CD4-positive, alpha-beta T cell (primary cell): ENCODE measurements at regions of chr4 and their contacts with region 1.

Region 1: DNA sequence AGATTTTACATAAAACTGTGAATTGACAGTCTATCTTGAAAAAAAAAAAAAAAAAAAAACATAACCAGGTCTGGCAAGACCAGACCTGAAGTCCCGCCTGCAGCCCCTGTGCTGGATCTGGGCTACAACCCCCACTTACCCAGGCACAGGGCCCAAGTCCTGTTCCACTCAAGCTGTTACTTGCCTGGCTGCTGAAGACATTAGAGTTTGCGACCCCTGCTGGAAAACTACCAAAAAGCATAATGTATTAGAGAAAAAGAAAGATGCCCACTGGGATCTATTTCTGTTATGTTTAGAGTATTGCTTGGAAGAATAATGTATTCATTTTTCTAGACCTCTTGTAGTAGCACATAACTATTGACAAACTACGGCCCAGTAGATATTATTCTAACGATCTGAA is 4.7 kb downstream of the HS3ST1 start:
- DNase-seq: peak in 4 of 14 experiments; percentile 39 to 58 (median 49)
- ATAC-seq: no peak
- H3K4me3 ChIP-seq: no peak overlapping the region
- H3K4me3 Mint-ChIP-seq: no peak overlapping the region
- H3K27ac ChIP-seq: no peak overlapping the region
- H3K27ac Mint-ChIP-seq: no peak overlapping the region
- H3K4me1 ChIP-seq: peaks cover 15% of the 10 kb centered on the region
- H3K4me1 Mint-ChIP-seq: peaks cover 13% of the 10 kb centered on the region
- H3K27me3 ChIP-seq: peaks cover 21 to 23% of the 10 kb centered on the region in 2 experiments
- H3K27me3 Mint-ChIP-seq: peaks cover 28% of the 10 kb centered on the region
- CTCF ChIP-seq: peak; percentile 42

Region 2: GRCh38 chr4:9762823-9763475 is 1661.1 kb before region 1 on chr4:
- CTCF ChIA-PET with region 1: no interaction called
- POLR2A ChIA-PET with region 1: no interaction called
- intact Hi-C with region 1: loop called in 1 of 2 experiments (anchors 5 kb)
- DNase-seq: peak in 6 of 14 experiments; percentile 13 to 65 (median 32)
- ATAC-seq: no peak
- H3K4me3 ChIP-seq: no peak overlapping the region
- H3K4me3 Mint-ChIP-seq: no peak overlapping the region
- H3K27ac ChIP-seq: no peak overlapping the region
- H3K27ac Mint-ChIP-seq: no peak overlapping the region
- H3K4me1 ChIP-seq: no peaks in the 10 kb centered on the region
- H3K4me1 Mint-ChIP-seq: no peaks in the 10 kb centered on the region
- H3K27me3 ChIP-seq: no peaks in the 10 kb centered on the region
- H3K27me3 Mint-ChIP-seq: peaks cover 20% of the 10 kb centered on the region
- CTCF ChIP-seq: peak; percentile 34

Region 3: GRCh38 chr4:10554694-10555093 is 869.3 kb before region 1 on chr4:
- CTCF ChIA-PET with region 1: no interaction called
- POLR2A ChIA-PET with region 1: no interaction called
- intact Hi-C with region 1: loop called in 1 of 2 experiments (anchors 2 kb)
- DNase-seq: peak in 12 of 14 experiments; percentile 4 to 67 (median 20)
- ATAC-seq: peak; percentile 48
- H3K4me3 ChIP-seq: no peak overlapping the region
- H3K4me3 Mint-ChIP-seq: no peak overlapping the region
- H3K27ac ChIP-seq: no peak overlapping the region
- H3K27ac Mint-ChIP-seq: no peak overlapping the region
- H3K4me1 ChIP-seq: peaks cover 2% of the 10 kb centered on the region
- H3K4me1 Mint-ChIP-seq: peaks cover 6% of the 10 kb centered on the region
- H3K27me3 ChIP-seq: no peaks in the 10 kb centered on the region
- H3K27me3 Mint-ChIP-seq: peaks cover 8% of the 10 kb centered on the region
- CTCF ChIP-seq: peak; percentile 79

Region 4: GRCh38 chr4:10582059-10582686 is 841.8 kb before region 1 on chr4:
- CTCF ChIA-PET with region 1: no interaction called
- POLR2A ChIA-PET with region 1: no interaction called
- intact Hi-C with region 1: loop called (anchors 1 to 2 kb)
- DNase-seq: peak in 4 of 14 experiments; percentile 25 to 52 (median 38)
- ATAC-seq: no peak
- H3K4me3 ChIP-seq: no peak overlapping the region
- H3K4me3 Mint-ChIP-seq: no peak overlapping the region
- H3K27ac ChIP-seq: no peak overlapping the region
- H3K27ac Mint-ChIP-seq: no peak overlapping the region
- H3K4me1 ChIP-seq: peaks cover 16% of the 10 kb centered on the region
- H3K4me1 Mint-ChIP-seq: peaks cover 17% of the 10 kb centered on the region
- H3K27me3 ChIP-seq: no peaks in the 10 kb centered on the region
- H3K27me3 Mint-ChIP-seq: no peaks in the 10 kb centered on the region
- CTCF ChIP-seq: peak; percentile 75

Region 5: GRCh38 chr4:11228546-11228945 is 195.5 kb before region 1 on chr4:
- CTCF ChIA-PET with region 1: no interaction called
- POLR2A ChIA-PET with region 1: no interaction called
- intact Hi-C with region 1: no loop called
- DNase-seq: no peak
- ATAC-seq: no peak
- H3K4me3 ChIP-seq: no peak overlapping the region
- H3K4me3 Mint-ChIP-seq: no peak overlapping the region
- H3K27ac ChIP-seq: no peak overlapping the region
- H3K27ac Mint-ChIP-seq: no peak overlapping the region
- H3K4me1 ChIP-seq: no peaks in the 10 kb centered on the region
- H3K4me1 Mint-ChIP-seq: no peaks in the 10 kb centered on the region
- H3K27me3 ChIP-seq: peaks cover 0 to 2% of the 10 kb centered on the region in 2 experiments
- H3K27me3 Mint-ChIP-seq: no peaks in the 10 kb centered on the region
- CTCF ChIP-seq: no peak

Region 6: GRCh38 chr4:12633053-12633651 is 1209.2 kb after region 1 on chr4:
- CTCF ChIA-PET with region 1: no interaction called
- POLR2A ChIA-PET with region 1: no interaction called
- intact Hi-C with region 1: loop called (anchors 5 to 10 kb)
- DNase-seq: peak; percentile 44 to 77 (median 58)
- ATAC-seq: peak; percentile 68
- H3K4me3 ChIP-seq: no peak overlapping the region
- H3K4me3 Mint-ChIP-seq: no peak overlapping the region
- H3K27ac ChIP-seq: no peak overlapping the region
- H3K27ac Mint-ChIP-seq: no peak overlapping the region
- H3K4me1 ChIP-seq: no peaks in the 10 kb centered on the region
- H3K4me1 Mint-ChIP-seq: no peaks in the 10 kb centered on the region
- H3K27me3 ChIP-seq: no peaks in the 10 kb centered on the region
- H3K27me3 Mint-ChIP-seq: peaks cover 15% of the 10 kb centered on the region
- CTCF ChIP-seq: peak; percentile 84